Activated naive CD8-positive, alpha-beta T cell treated with anti-CD3 and anti-CD28 coated beads, Interleukin-2, amount 10 ng/mL, durations not matched to agents 7 days and 5 days (primary cell): ENCODE measurements at regions of chr1 and their contacts with region 1.

Region 1: DNA sequence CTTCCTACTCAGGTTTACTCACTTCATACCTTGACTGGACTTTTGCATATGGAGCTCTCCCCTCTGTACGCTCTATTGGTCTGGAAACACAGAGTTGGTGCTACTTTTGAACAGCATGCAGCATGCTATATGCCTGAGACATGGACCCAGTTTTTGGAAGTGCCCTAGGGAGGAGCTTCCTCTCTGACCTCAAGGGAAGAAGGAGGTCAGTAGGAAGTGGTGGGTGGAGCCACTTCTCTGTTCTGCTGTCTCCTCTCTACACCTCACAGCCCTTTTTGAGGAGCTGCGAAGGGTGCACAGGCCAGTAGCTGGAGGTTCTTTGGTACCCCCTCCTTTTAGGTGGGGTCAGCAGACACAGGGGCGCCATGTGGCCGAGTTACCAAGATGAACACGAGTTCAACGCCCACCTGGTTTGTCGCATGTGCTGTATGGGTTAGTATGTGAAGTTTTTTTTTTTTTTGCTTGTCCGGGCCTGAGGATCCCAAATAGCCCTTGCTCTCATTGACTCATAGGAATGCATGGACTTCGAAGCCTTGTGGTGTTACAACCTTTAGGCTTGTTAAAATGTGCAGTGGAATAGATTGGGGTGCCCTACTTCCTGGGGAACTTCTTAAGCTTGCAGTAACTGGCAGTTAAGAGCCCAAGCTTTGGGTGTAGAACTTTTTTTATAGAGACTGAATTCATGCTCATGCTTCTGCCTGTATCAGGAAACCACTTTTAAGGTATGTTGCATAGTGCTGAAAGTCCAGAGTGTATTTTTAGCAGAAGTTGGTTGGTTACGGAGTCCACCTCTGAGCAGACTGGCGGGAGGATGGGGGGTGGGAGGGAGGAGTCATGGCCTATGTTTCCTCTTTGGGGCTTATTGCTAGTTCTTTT is 10.7 kb downstream of the MACF1 start:
- DNase-seq: peak; percentile 48
- ATAC-seq: peak; percentile 80
- H3K4me3 Mint-ChIP-seq: peak overlapping the region; percentile 92
- H3K27ac Mint-ChIP-seq: peak overlapping the region; percentile 95
- H3K4me1 Mint-ChIP-seq: peaks cover 35% of the 10 kb centered on the region
- H3K27me3 Mint-ChIP-seq: no peaks in the 10 kb centered on the region

Region 2: DNA sequence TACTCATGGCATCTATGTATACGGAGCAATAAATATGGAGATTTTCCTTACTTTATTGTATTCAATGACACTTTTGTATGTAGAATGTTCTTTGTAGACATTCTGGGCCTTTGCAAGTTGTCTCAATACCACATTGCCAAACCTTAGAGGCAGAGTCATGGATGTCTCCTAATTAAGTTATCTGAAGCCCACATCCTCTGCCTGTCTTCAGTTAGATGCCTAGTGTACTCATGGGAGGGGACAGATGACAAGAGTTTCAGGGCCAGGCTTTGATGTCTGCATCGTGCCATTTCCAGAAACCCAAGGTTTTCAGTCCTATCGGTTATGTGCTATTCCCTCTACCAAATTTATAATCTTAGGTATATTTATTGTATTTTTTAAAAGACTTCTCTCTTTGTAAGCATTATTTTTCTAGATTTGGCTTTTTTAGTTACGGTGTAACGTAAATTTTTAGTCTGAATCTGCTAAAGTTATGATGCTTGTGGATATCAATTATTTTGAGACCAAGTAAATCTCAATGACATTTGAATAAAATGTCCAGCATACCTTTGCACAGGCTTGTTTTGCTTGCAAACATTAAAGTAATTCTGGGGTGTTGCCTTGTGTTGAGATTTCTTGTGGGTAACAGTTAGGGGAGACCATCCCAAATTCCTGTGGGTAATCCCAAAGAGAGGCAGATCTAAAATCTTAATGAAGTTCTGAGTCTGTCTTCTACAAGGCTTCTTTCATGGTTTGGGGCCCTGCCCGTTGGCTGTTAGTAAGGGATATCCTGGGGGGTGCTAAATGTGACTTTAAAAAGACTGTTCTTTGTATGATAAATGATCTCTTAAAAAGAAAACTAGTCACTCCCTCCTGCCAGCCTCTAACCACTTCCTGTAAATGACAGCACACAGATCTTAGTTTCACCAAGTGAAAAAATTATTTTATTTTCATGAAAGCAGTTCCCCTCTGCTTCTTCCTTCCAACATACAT is 18.7 kb before region 1 on chr1:
- POLR2A ChIA-PET with region 1: interaction called, 53 read pairs
- DNase-seq: peak; percentile 44
- ATAC-seq: peak; percentile 61
- H3K4me3 Mint-ChIP-seq: peak overlapping the region; percentile 78
- H3K27ac Mint-ChIP-seq: peak overlapping the region; percentile 97
- H3K4me1 Mint-ChIP-seq: peaks cover 59% of the 10 kb centered on the region
- H3K27me3 Mint-ChIP-seq: no peaks in the 10 kb centered on the region

Region 3: GRCh38 chr1:39204441-39205081 is 10.7 kb before region 1 on chr1 and contains the start of gene MACF1:
- POLR2A ChIA-PET with region 1: interaction called, 89 read pairs
- DNase-seq: peak; percentile 41
- ATAC-seq: peak; percentile 44
- H3K4me3 Mint-ChIP-seq: peak within 1 kb of the TSS; percentile 95
- H3K27ac Mint-ChIP-seq: peak within 1 kb of the TSS; percentile 96
- H3K4me1 Mint-ChIP-seq: peaks cover 41% of the 10 kb centered on the region
- H3K27me3 Mint-ChIP-seq: no peaks in the 10 kb centered on the region
- total RNA-seq, gene MACF1: 328 to 344 TPM

Region 4: GRCh38 chr1:39230261-39231190 is 15.3 kb after region 1 on chr1:
- POLR2A ChIA-PET with region 1: interaction called, 12 read pairs
- DNase-seq: no peak
- ATAC-seq: peak; percentile 75
- H3K4me3 Mint-ChIP-seq: peak overlapping the region; percentile 40
- H3K27ac Mint-ChIP-seq: peak overlapping the region; percentile 72
- H3K4me1 Mint-ChIP-seq: peaks cover 35% of the 10 kb centered on the region
- H3K27me3 Mint-ChIP-seq: no peaks in the 10 kb centered on the region